ENCODE measurements at regions of chr20 and their contacts with region 1.

Region 1: DNA sequence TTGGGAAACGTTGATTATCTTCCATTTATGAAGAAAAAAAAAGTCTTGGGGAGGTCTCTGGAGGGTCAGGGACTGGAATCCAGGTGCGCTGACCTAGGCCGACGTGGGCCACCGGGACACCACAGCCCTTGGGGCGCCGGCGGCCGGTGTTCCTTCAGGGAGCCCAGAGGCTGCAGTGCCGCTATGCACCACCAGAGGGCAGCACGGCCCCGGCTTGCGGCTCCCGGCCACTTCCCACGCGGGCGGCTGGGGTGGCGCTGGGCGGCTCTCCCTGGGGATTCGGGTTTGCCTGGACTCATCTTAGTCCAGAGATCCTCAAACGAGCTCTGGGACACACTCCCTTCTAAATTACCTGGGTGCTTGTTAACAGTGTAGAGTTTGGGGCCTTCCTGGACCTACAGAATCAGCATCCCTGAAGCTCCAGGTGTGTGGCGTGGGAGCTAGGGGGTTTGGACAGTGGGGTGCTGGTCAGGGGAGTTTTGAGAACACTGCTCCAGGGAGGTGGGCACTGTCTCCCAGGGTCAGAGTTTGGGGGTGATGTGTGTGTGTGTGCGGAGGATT is 23.0 kb upstream of the GTSF1L start:
- DNase-seq: peak in 1 of 2 experiments; percentile 87
- H3K4me3 ChIP-seq: peak overlapping the region; percentile 13; the same call in 1 of the 2 replicates
- H3K27ac ChIP-seq: no peak overlapping the region
- H3K4me1 ChIP-seq: peaks cover 62% of the 10 kb centered on the region
- H3K27me3 ChIP-seq: no peaks in the 10 kb centered on the region
- CTCF ChIP-seq: peak; percentile 100

Region 2: DNA sequence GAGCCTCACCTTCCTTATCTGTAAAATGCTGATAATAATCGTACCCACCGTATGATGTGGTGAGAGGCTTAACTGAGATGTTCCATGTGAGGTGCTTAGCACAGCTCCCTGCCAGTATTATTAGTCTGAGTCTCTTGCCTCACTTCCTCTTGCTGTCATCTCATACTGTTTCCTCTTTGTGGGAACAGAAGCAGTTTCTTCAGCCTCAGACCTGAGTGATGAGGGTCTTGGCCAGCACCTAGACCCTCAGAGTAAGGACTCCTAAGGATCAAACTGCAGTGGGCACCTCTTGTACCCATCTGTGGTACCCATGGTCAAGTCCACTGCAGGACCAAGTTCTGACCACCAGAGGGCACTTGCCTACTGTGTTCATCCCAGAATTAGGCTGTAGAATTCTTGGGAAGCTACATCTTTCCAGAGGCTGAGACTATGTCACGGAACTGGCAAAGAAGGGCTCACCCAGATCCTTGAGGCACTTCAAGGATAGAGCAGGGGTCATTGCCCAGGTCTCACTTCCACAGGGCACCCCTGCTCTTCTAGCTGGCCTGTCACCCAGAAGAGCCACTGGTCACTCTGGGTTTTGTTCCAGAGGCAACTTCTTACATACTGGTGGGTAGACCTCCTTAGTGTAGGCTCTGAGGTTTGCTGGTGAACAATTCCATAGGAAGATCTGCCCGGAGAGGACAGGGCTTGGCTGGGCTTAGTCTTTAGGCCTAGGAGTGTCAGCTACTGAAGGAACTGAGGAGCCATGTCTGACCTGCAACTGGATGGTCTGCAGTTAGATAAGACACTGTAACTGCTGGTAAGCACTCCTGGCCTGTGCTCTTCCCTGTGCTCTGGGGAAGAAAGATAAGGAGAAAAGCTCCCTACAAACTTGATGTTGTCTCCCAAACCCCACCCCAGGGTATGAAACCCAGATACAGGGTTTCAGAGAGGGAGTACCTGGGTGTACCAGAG is 211.6 kb before region 1 on chr20:
- CTCF ChIA-PET with region 1: interaction called, 5 read pairs
- POLR2A ChIA-PET with region 1: no interaction called
- intact Hi-C with region 1: loop called (anchors 2 kb)
- DNase-seq: peak; percentile 46 to 65
- H3K4me3 ChIP-seq: no peak overlapping the region
- H3K27ac ChIP-seq: no peak overlapping the region
- H3K4me1 ChIP-seq: peaks cover 13% of the 10 kb centered on the region
- H3K27me3 ChIP-seq: no peaks in the 10 kb centered on the region
- CTCF ChIP-seq: peak; percentile 98

Region 3: DNA sequence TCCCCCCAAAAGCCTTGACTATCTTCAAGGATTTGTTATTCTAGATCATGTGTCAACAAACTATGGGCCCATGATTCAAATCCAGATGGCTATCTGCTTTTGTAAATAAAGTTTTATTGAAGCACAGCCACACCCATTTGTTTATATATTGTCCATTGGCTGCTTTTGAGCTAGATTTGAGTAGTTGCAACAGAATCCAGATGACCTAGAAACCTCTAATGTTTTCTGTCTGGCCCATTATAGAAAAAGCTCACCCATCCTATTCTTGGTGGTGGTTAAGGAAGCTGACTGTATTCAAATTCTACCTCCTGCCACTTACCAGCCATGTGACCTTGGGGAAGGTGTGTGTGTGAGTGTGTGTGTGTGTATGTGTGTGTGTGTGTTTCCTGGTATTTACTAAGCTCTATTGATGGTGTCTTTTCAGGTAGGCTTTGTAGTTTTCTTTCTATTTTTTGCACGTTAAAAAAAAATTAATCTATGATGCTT is 21.7 kb before region 1 on chr20:
- CTCF ChIA-PET with region 1: no interaction called
- POLR2A ChIA-PET with region 1: no interaction called
- intact Hi-C with region 1: no loop called
- DNase-seq: peak in 1 of 2 experiments; percentile 47
- H3K4me3 ChIP-seq: no peak overlapping the region
- H3K27ac ChIP-seq: no peak overlapping the region
- H3K4me1 ChIP-seq: peaks cover 7% of the 10 kb centered on the region; the same call in 1 of the 2 replicates
- H3K27me3 ChIP-seq: no peaks in the 10 kb centered on the region
- CTCF ChIP-seq: no peak

Region 4: DNA sequence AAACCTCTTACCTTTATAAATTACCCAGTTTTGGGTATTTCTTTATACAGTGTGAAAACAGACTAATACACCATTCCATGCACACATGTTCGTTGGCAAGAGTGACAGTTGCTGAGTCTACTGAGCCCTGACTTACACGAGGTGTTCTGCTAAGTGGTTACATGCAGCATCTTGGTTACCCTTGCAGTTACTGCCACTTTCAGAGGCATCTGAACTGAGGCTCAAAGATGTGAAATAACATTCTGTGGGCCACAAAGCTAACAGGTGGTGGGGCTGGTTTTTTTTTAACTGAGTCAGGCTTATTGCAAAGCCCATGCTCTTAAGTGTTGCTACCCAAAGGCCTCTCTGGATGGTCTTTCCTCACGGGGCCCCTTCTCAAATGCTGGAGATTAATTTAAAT is 31.4 kb after region 1 on chr20:
- CTCF ChIA-PET with region 1: no interaction called
- POLR2A ChIA-PET with region 1: interaction called, 3 read pairs
- intact Hi-C with region 1: loop called (anchors 1 kb)
- DNase-seq: no peak
- H3K4me3 ChIP-seq: no peak overlapping the region
- H3K27ac ChIP-seq: peak overlapping the region; percentile 39
- H3K4me1 ChIP-seq: peaks cover 20% of the 10 kb centered on the region
- H3K27me3 ChIP-seq: no peaks in the 10 kb centered on the region
- CTCF ChIP-seq: no peak

Region 5: DNA sequence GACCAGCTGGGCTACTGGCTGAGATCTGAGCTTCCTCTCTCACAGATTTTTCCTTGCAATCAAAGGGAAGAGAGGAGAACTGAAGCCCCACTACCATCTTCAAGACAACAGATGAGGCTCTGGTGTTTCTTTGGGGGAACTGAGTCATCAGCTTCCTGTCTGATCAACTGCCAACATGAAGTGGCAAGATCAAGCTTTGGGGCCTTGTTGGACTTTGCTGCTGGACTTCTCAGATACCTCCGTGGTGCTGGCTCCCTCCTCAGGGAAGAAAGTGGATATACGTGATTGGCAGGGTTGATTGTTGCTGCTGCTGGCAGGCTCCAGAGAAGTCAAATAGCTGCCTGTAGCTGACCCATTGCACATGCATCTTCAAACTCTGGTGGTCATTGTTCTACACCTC is 161.3 kb after region 1 on chr20:
- CTCF ChIA-PET with region 1: interaction called, 10 read pairs
- POLR2A ChIA-PET with region 1: interaction called, 4 read pairs
- intact Hi-C with region 1: loop called (anchors 1 kb)
- DNase-seq: peak; percentile 40 to 77
- H3K4me3 ChIP-seq: no peak overlapping the region
- H3K27ac ChIP-seq: no peak overlapping the region
- H3K4me1 ChIP-seq: peaks cover 22% of the 10 kb centered on the region
- H3K27me3 ChIP-seq: no peaks in the 10 kb centered on the region
- CTCF ChIP-seq: peak; percentile 69

Region 6: DNA sequence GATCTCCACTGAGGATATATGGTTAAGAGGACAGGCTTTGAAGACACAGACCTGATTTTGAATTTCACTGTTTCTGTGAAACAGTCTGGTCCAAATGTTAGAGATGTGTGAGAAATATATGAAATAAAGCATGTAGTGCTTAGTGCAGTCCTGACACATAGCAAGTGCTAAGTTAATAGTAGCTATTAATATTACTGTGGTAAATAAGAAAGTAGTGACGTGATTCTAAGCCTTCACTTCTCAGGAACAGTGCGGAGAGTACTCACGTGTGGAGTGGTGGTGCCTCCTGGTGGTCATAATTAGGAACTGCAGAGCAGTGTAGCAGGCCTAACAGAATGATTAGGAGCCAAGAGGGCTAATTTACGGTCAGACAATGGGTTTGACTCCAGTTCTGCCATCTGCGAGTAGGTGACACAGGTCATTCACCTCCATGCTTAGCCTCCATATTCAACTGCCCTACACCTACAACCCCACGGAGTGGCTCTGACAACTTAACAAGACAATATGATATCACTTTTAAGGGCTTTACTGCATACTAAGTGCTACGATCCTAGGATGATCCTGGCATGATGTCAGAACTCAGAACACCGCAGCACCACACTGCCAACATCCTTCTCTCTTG is 330.9 kb after region 1 on chr20:
- CTCF ChIA-PET with region 1: interaction called, 5 read pairs
- POLR2A ChIA-PET with region 1: no interaction called
- intact Hi-C with region 1: loop called (anchors 1 kb)
- DNase-seq: peak; percentile 58 to 80
- H3K4me3 ChIP-seq: no peak overlapping the region
- H3K27ac ChIP-seq: no peak overlapping the region
- H3K4me1 ChIP-seq: peaks cover 17% of the 10 kb centered on the region
- H3K27me3 ChIP-seq: no peaks in the 10 kb centered on the region
- CTCF ChIP-seq: peak; percentile 100

Region 7: DNA sequence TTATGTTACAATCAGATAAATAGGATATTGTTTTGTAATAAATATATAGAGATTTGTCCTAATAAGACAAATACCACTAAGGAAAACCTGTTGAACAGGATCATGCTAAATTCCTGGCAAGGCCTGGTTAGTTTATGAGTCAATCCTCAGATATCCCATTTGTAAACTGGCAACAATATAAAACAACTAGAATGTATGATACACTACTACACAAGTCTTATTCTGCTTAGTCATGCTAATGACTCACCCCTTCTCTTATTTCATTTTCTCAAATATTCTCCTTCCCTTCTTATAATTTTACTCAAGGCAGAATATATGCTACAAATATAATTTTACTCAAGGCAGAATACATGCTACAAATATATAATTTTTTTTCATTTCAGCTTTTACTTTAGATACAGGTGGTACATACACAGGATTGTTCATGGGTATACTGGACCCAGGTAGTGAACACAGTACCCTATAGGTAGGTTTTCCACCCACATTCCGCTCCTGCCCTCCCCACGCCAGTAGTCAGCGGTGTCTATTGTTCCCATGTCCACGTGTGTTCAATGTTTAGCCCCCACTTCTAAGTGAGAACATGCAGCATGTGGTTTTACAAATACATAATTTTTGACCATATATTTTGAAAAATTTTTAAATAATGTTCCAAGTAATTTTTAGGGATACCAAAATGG is 454.5 kb after region 1 on chr20:
- CTCF ChIA-PET with region 1: no interaction called
- POLR2A ChIA-PET with region 1: no interaction called
- intact Hi-C with region 1: loop called (anchors 1 kb)
- DNase-seq: peak; percentile 47 to 100
- H3K4me3 ChIP-seq: peak overlapping the region; percentile 49; the same call in 1 of the 2 replicates
- H3K27ac ChIP-seq: peak overlapping the region; percentile 96
- H3K4me1 ChIP-seq: peaks cover 84% of the 10 kb centered on the region
- H3K27me3 ChIP-seq: no peaks in the 10 kb centered on the region
- CTCF ChIP-seq: 0 out of 2 replicates have a peak, but pooled peaks have one; percentile 14

Region 8: GRCh38 chr20:44704551-44704971 is 954.7 kb after region 1 on chr20:
- CTCF ChIA-PET with region 1: no interaction called
- POLR2A ChIA-PET with region 1: interaction called, 19 read pairs
- intact Hi-C with region 1: no loop called
- DNase-seq: no peak
- H3K4me3 ChIP-seq: no peak overlapping the region
- H3K27ac ChIP-seq: no peak overlapping the region
- H3K4me1 ChIP-seq: peaks cover 9% of the 10 kb centered on the region
- H3K27me3 ChIP-seq: no peaks in the 10 kb centered on the region
- CTCF ChIP-seq: no peak

Measured in PC-9 (cell line).